ENCODE measurements at regions of chr7 and their contacts with region 1.

Region 1: GRCh38 chr7:32846701-32847100 is 44.9 kb downstream of the KBTBD2 start:
- DNase-seq: peak; percentile 87 to 91
- H3K4me3 ChIP-seq: no peak overlapping the region
- H3K4me3 Mint-ChIP-seq: no peak overlapping the region
- H3K27ac Mint-ChIP-seq: no peak overlapping the region
- H3K4me1 ChIP-seq: no peaks in the 10 kb centered on the region; the same call in 1 of the 2 replicates
- H3K4me1 Mint-ChIP-seq: peaks cover 7% of the 10 kb centered on the region
- H3K27me3 ChIP-seq: no peaks in the 10 kb centered on the region
- H3K27me3 Mint-ChIP-seq: peaks cover 3% of the 10 kb centered on the region
- CTCF ChIP-seq: peak; percentile 89 to 94

Region 2: DNA sequence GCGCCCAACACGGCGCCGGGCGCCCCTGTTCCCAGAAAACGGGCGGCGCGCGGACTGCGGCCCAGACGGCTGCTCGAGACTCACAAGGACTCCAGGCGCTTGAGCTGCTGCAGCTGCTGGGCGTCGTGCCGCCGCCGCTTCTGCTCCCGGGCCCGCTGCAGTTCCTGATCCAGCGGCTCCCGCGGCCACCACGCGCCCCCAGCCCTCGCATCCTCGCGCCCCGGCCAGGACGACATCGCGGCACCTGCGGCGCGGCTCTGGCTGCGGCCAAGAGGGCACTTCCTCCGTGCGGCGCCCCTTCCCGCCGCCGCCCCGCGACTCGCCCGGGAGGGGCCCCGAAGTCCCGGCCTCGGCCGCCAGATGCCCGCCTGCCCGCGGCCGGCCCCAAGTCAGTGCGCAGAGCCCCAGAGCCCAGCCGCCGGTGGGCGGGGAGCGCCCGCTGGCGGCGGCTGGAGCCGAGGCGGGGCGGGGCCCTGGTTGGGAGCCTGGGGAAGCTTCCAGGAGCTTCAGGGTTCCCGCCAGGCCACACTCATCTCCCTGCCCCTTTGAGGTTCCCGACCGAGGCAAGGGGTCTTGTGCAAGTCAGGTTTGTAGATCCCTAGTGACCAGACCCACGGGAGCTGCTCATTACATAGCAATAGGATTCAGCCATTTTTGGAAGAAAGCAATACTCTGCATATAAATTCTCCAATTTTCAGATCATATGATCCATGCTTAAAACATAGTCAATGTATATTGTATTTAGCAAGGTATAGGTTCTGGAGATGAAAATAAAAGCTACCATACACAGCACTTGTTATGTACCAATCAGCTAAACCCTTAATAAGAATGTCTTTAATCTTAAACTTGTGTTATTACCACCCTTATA is 96.3 kb after region 1 on chr7:
- CTCF ChIA-PET with region 1: interaction called, 25 read pairs
- POLR2A ChIA-PET with region 1: no interaction called
- intact Hi-C with region 1: loop called (anchors 1 kb)
- DNase-seq: peak; percentile 80 to 90
- H3K4me3 ChIP-seq: peak overlapping the region; percentile 62
- H3K4me3 Mint-ChIP-seq: peak overlapping the region; percentile 84
- H3K27ac Mint-ChIP-seq: no peak overlapping the region
- H3K4me1 ChIP-seq: peaks cover 10% of the 10 kb centered on the region; the same call in 1 of the 2 replicates
- H3K4me1 Mint-ChIP-seq: peaks cover 9% of the 10 kb centered on the region
- H3K27me3 ChIP-seq: no peaks in the 10 kb centered on the region
- H3K27me3 Mint-ChIP-seq: no peaks in the 10 kb centered on the region
- CTCF ChIP-seq: peak; percentile 46 to 48